ENCODE measurements at regions of chr9 and their contacts with region 1.

Region 1: DNA sequence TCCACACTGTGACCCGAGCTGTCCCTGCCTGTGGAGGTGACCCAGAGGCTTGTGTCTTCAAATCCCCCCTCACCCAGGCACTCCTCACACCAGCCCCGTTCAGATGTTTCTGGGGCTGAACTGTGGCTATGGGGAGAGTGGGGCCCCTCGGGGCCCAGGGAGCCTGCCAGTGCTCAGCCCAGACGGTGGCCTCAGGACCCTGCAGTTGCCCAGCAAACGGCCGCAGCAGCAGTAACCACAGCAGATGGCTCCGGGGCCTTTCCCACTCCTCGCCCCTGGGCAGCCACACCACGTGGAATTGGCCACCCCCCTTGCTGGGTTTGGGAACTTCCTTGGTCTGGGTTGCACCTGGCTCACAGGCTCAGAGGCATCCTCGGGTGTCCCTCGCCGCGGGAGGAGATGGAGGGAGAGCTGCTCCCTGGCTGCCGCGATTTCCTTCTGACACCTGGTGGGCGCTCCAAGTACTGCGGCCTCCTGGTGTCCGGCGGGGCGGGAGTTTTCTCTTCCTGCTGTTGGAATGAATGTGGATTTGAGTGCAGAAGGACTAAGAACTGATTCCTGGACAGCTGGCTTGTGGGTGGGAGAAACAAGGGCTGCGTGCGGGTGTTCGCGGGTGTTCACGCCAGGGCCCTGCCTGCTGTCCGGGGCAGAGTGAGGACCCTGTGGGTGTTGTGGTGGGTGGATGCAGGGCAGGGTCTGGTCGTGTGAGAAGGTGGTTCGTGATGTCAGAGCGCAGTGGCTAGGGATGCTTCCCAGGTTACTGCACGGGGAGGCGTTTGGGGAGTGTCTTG is 97.5 kb downstream of the COL5A1 start:
- DNase-seq: no peak
- H3K4me3 ChIP-seq: no peak overlapping the region
- H3K27ac ChIP-seq: no peak overlapping the region
- H3K4me1 ChIP-seq: peaks cover 0 to 30% (median 10%) of the 10 kb centered on the region in 3 donors
- H3K27me3 ChIP-seq: peaks cover 0 to 13% (median 0%) of the 10 kb centered on the region in 4 donors
- CTCF ChIP-seq: peak; percentile 58 to 94 (median 85)
- POLR2A ChIP-seq: no peak

Region 2: GRCh38 chr9:134455934-134456739 is 282.9 kb before region 1 on chr9:
- intact Hi-C with region 1: loop called (anchors 10 kb)
- DNase-seq: peak; percentile 40
- H3K4me3 ChIP-seq: peak overlapping the region; percentile 14 to 66 (median 46)
- H3K27ac ChIP-seq: peak overlapping the region; percentile 69 to 95 (median 85)
- H3K4me1 ChIP-seq: peaks cover 18 to 43% (median 18%) of the 10 kb centered on the region in 3 donors
- H3K27me3 ChIP-seq: no peaks in the 10 kb centered on the region
- CTCF ChIP-seq: no peak
- POLR2A ChIP-seq: peak in 1 of 4 donors; percentile 39

Region 3: GRCh38 chr9:134602547-134603309 is 136.3 kb before region 1 on chr9:
- intact Hi-C with region 1: no loop called
- DNase-seq: no peak
- H3K4me3 ChIP-seq: no peak overlapping the region
- H3K27ac ChIP-seq: peak overlapping the region in 2 of 4 donors; percentile 25 to 44
- H3K4me1 ChIP-seq: no peaks in the 10 kb centered on the region
- H3K27me3 ChIP-seq: peaks cover 0 to 48% (median 0%) of the 10 kb centered on the region in 4 donors
- CTCF ChIP-seq: no peak
- POLR2A ChIP-seq: no peak

Region 4: GRCh38 chr9:134698587-134699342 is 40.3 kb before region 1 on chr9:
- intact Hi-C with region 1: loop called (anchors 2 kb)
- DNase-seq: no peak
- H3K4me3 ChIP-seq: no peak overlapping the region
- H3K27ac ChIP-seq: peak overlapping the region in 1 of 4 donors; percentile 29
- H3K4me1 ChIP-seq: peaks cover 4 to 53% (median 7%) of the 10 kb centered on the region in 3 donors
- H3K27me3 ChIP-seq: peaks cover 0 to 90% (median 0%) of the 10 kb centered on the region in 4 donors
- CTCF ChIP-seq: peak; percentile 50 to 89 (median 83)
- POLR2A ChIP-seq: no peak